ENCODE measurements at regions of chr11 and their contacts with region 1.

Region 1: GRCh38 chr11:122673701-122674100 is 18.2 kb downstream of the UBASH3B start:
- DNase-seq: no peak
- H3K4me3 ChIP-seq: no peak overlapping the region
- H3K4me3 Mint-ChIP-seq: peak overlapping the region in 4 of 8 donors; percentile 22 to 60 (median 34)
- H3K27ac ChIP-seq: no peak overlapping the region
- H3K27ac Mint-ChIP-seq: peak overlapping the region in 6 of 7 donors; percentile 36 to 77 (median 61)
- H3K4me1 ChIP-seq: peaks cover 90% of the 10 kb centered on the region
- H3K4me1 Mint-ChIP-seq: peaks cover 50 to 91% (median 72%) of the 10 kb centered on the region in 4 donors
- H3K27me3 ChIP-seq: no peaks in the 10 kb centered on the region
- H3K27me3 Mint-ChIP-seq: no peaks in the 10 kb centered on the region

Region 2: GRCh38 chr11:122661182-122661945 is 12.3 kb before region 1 on chr11:
- CTCF ChIA-PET with region 1: interaction called, 65 read pairs
- POLR2A ChIA-PET with region 1: interaction called, 73 read pairs
- intact Hi-C with region 1: loop called (anchors 1 kb)
- DNase-seq: no peak
- H3K4me3 ChIP-seq: no peak overlapping the region
- H3K4me3 Mint-ChIP-seq: peak overlapping the region in 1 of 8 donors; percentile 18
- H3K27ac ChIP-seq: no peak overlapping the region
- H3K27ac Mint-ChIP-seq: peak overlapping the region in 3 of 7 donors; percentile 57 to 68 (median 61)
- H3K4me1 ChIP-seq: peaks cover 63% of the 10 kb centered on the region
- H3K4me1 Mint-ChIP-seq: peaks cover 36 to 80% (median 59%) of the 10 kb centered on the region in 4 donors
- H3K27me3 ChIP-seq: no peaks in the 10 kb centered on the region
- H3K27me3 Mint-ChIP-seq: no peaks in the 10 kb centered on the region

Region 3: GRCh38 chr11:122690801-122691548 is 17.3 kb after region 1 on chr11:
- CTCF ChIA-PET with region 1: interaction called, 36 read pairs
- POLR2A ChIA-PET with region 1: interaction called, 58 read pairs
- intact Hi-C with region 1: loop called (anchors 2 kb)
- DNase-seq: peak in 3 of 5 donors; percentile 14 to 26 (median 18)
- H3K4me3 ChIP-seq: peak overlapping the region in 1 of 2 donors; percentile 40
- H3K4me3 Mint-ChIP-seq: peak overlapping the region; percentile 74 to 88 (median 76)
- H3K27ac ChIP-seq: peak overlapping the region; percentile 63
- H3K27ac Mint-ChIP-seq: peak overlapping the region; percentile 92 to 94 (median 93)
- H3K4me1 ChIP-seq: peaks cover 76% of the 10 kb centered on the region
- H3K4me1 Mint-ChIP-seq: peaks cover 55 to 87% (median 73%) of the 10 kb centered on the region in 4 donors
- H3K27me3 ChIP-seq: no peaks in the 10 kb centered on the region
- H3K27me3 Mint-ChIP-seq: no peaks in the 10 kb centered on the region

Region 4: GRCh38 chr11:122832721-122833470 is 159.2 kb after region 1 on chr11:
- CTCF ChIA-PET with region 1: no interaction called
- POLR2A ChIA-PET with region 1: no interaction called
- intact Hi-C with region 1: no loop called
- DNase-seq: no peak
- H3K4me3 ChIP-seq: no peak overlapping the region
- H3K4me3 Mint-ChIP-seq: no peak overlapping the region
- H3K27ac ChIP-seq: no peak overlapping the region
- H3K27ac Mint-ChIP-seq: no peak overlapping the region
- H3K4me1 ChIP-seq: no peaks in the 10 kb centered on the region
- H3K4me1 Mint-ChIP-seq: peaks cover 0 to 2% (median 0%) of the 10 kb centered on the region in 4 donors
- H3K27me3 ChIP-seq: no peaks in the 10 kb centered on the region
- H3K27me3 Mint-ChIP-seq: peaks cover 8 to 11% of the 10 kb centered on the region in 2 donors

Measured in CD4-positive, alpha-beta memory T cell (primary cell).